PC-3 (cell line): ENCODE measurements at regions of chr1 and their contacts with region 1.

Region 1: GRCh38 chr1:41241782-41242341 is at the start of gene SCMH1:
- DNase-seq: peak; percentile 40
- ATAC-seq: peak; percentile 46
- H3K4me3 ChIP-seq: peak within 1 kb of the TSS; percentile 73
- H3K27ac ChIP-seq: peak within 1 kb of the TSS; percentile 44
- H3K4me1 ChIP-seq: peaks cover 57% of the 10 kb centered on the region
- H3K27me3 ChIP-seq: no peaks in the 10 kb centered on the region
- CTCF ChIP-seq: no peak
- total RNA-seq, gene SCMH1: 33.6 and 36.5 TPM in 2 replicates

Region 2: DNA sequence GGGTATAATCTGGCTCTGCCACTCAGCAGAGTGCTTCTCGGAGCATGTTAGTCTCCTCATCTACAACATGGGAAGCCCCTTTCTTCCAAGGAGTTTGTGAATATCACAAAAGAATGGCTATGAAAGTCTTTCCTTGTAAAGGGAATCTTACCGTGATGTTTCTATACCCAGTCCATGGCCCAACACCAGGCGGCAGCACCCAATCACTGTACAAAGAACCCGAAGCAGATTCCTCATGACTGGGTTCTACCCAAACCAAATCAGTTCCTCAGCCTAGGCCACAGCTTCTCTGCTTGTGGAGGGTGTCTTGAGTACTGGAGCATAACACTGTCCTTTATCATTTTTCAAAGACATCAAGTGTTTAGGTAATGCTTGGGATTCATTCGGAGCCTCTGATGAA is 203.8 kb before region 1 on chr1:
- CTCF ChIA-PET with region 1: interaction called, 3 read pairs
- POLR2A ChIA-PET with region 1: no interaction called
- intact Hi-C with region 1: loop called (anchors 10 kb)
- DNase-seq: no peak
- ATAC-seq: no peak
- H3K4me3 ChIP-seq: no peak overlapping the region
- H3K27ac ChIP-seq: no peak overlapping the region
- H3K4me1 ChIP-seq: no peaks in the 10 kb centered on the region
- H3K27me3 ChIP-seq: no peaks in the 10 kb centered on the region
- CTCF ChIP-seq: no peak

Region 3: DNA sequence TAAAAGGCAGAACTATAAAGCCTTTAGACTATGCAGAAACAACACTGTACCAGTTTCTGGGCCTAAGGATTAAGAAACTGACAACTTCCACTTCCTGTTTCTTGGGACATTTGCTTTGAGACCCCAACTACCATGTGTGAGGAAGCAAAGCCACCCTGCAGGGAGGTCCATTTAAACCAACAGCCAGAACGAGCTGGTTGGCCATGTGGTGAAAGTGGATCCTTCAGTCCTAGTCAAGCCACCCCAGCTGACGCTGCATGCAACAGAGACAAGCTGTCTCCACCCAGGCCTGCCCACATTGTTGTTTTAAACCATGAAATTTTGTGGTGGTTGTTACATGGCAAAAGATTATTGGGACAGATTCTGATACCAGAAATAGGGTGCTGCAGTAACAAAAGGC is 188.5 kb before region 1 on chr1:
- CTCF ChIA-PET with region 1: no interaction called
- POLR2A ChIA-PET with region 1: no interaction called
- intact Hi-C with region 1: loop called (anchors 5 kb)
- DNase-seq: no peak
- ATAC-seq: no peak
- H3K4me3 ChIP-seq: no peak overlapping the region
- H3K27ac ChIP-seq: no peak overlapping the region
- H3K4me1 ChIP-seq: no peaks in the 10 kb centered on the region
- H3K27me3 ChIP-seq: no peaks in the 10 kb centered on the region
- CTCF ChIP-seq: no peak

Region 4: DNA sequence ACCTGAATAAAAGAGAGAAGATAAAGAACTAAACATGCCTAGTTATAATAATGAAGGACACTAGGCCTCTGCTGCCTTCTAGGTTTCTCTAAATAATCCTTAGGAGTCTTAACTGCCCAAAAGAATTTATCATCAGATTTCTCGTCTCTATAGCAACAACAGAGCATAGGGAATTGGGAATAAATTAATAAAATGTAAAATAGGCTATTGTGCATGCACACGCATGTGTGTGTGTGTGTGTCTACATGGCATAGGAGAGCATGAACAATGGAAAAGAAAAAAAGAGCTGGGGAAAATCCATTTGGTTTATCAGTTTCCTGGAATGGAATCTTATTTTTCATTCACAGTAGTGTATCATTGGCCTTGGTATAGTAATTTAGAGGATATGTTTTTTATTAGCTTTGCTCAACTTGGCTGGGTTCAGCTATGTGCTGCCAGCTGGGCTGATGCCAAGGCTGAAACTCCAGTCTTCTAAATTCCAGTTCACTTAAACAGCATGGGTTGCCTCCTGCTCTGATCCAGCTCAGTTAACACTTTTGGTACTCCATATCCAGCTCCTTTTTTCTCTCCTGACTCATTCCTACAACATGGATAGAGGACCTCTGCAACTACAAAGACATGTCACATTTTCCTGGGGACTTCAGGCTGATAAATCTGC is 139.8 kb before region 1 on chr1:
- CTCF ChIA-PET with region 1: no interaction called
- POLR2A ChIA-PET with region 1: interaction called, 6 read pairs
- intact Hi-C with region 1: loop called (anchors 5 kb)
- DNase-seq: peak; percentile 88
- ATAC-seq: peak; percentile 97
- H3K4me3 ChIP-seq: no peak overlapping the region
- H3K27ac ChIP-seq: 0 out of 2 replicates have a peak overlapping the region, but pooled peaks have one; percentile 7
- H3K4me1 ChIP-seq: peaks cover 18% of the 10 kb centered on the region
- H3K27me3 ChIP-seq: no peaks in the 10 kb centered on the region
- CTCF ChIP-seq: no peak

Region 5: DNA sequence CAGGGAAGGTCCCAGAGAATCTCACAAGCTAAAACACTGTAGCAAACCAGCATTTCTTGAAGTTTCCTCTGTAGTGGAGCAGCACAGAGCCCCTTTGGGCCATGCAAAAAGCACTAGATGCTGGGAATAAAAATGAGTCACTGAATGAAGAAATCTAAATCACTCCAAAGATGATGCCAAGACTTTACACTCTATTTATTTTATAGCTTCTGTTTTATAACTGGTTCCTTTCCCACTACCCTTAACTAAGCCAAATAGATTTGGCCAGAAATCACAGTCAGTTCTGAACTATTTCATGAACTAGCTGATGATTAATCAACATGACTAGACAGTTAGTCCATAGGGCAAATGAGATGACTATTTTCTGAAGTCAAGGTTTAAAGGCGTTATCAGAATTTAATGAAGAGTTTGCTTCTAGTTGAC is 89.2 kb before region 1 on chr1:
- CTCF ChIA-PET with region 1: interaction called, 9 read pairs
- POLR2A ChIA-PET with region 1: no interaction called
- intact Hi-C with region 1: loop called (anchors 1 kb)
- DNase-seq: peak; percentile 96
- ATAC-seq: peak; percentile 85
- H3K4me3 ChIP-seq: no peak overlapping the region
- H3K27ac ChIP-seq: peak overlapping the region; percentile 80
- H3K4me1 ChIP-seq: peaks cover 56% of the 10 kb centered on the region
- H3K27me3 ChIP-seq: no peaks in the 10 kb centered on the region
- CTCF ChIP-seq: no peak

Region 6: DNA sequence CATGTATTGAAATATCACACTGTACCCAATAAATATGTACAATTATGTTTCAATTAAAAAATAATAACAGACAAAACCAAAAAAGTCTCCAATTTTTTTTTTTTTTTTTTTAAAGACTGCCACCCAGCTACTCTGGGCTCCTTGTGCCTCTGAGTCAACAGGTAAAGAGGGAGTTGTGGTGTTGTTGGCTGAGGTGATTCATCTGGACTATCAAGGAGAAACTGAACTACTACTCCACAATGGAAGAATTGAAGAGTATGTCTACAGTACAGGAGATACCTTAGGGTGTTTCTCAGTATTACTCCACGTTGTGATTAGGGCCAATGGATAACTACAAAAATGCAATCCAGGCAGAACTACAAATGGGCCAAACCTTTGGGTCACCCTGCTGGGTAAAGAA is 67.7 kb before region 1 on chr1:
- CTCF ChIA-PET with region 1: no interaction called
- POLR2A ChIA-PET with region 1: interaction called, 6 read pairs
- intact Hi-C with region 1: loop called (anchors 5 kb)
- DNase-seq: peak; percentile 78
- ATAC-seq: peak; percentile 99
- H3K4me3 ChIP-seq: no peak overlapping the region
- H3K27ac ChIP-seq: no peak overlapping the region
- H3K4me1 ChIP-seq: peaks cover 21% of the 10 kb centered on the region
- H3K27me3 ChIP-seq: no peaks in the 10 kb centered on the region
- CTCF ChIP-seq: no peak

Region 7: DNA sequence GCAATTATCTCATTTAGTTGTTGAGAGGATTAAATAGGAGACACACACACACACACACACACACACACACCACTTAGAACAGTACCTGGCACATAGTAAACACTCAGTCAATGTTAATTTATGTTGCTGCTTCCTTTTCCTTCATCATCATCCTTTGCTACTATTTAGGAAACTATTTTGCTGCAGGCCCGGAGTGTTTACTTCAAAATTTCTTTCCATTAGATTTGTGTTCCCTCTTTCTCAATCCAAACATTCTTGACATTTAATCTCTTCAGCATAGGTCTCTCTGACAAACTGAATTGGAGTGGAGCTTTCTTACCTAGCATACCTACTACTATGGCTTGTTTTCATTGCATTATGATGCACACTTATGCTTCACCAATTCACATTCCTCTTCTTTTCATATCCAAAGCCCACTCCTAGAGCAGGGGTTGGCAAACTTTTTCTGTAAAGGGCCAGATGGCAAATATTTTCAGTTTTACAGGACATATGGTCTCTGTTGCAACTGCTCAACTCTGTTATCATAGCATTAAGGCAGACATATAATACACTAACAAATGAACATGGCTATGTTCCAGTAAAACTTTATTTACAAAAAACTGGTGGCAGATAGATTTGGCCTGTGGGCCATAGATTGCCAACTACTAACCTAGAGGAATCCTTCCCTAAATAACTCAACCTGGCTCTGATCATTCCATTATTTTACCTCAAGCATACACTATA is 49.2 kb before region 1 on chr1:
- CTCF ChIA-PET with region 1: no interaction called
- POLR2A ChIA-PET with region 1: no interaction called
- intact Hi-C with region 1: no loop called
- DNase-seq: no peak
- ATAC-seq: no peak
- H3K4me3 ChIP-seq: no peak overlapping the region
- H3K27ac ChIP-seq: no peak overlapping the region
- H3K4me1 ChIP-seq: no peaks in the 10 kb centered on the region
- H3K27me3 ChIP-seq: no peaks in the 10 kb centered on the region
- CTCF ChIP-seq: no peak

Region 8: DNA sequence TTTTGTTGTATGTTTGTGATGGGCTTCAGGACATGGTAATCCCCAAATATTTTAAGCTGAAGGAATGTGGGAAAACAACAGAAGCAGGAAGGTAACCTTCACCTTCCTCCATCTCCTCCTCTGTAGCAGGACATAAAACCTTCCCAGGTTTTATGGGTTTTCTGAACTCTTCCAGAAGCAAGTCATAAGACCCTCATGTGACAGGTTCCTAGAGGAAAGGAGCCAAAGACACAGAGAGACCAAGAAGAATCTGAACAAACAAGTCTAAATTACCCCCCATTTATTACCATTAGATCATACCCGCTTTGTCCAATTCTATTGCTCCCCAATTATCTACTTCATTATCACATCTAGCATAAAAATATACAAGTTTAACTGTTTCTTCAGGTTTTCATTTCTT is 28.5 kb before region 1 on chr1:
- CTCF ChIA-PET with region 1: no interaction called
- POLR2A ChIA-PET with region 1: no interaction called
- intact Hi-C with region 1: no loop called
- DNase-seq: no peak
- ATAC-seq: no peak
- H3K4me3 ChIP-seq: no peak overlapping the region
- H3K27ac ChIP-seq: no peak overlapping the region
- H3K4me1 ChIP-seq: peaks cover 13% of the 10 kb centered on the region
- H3K27me3 ChIP-seq: no peaks in the 10 kb centered on the region
- CTCF ChIP-seq: no peak